Breast epithelium (tissue), 4 donors: ENCODE measurements at regions of chr11 and their contacts with region 1.

Region 1: DNA sequence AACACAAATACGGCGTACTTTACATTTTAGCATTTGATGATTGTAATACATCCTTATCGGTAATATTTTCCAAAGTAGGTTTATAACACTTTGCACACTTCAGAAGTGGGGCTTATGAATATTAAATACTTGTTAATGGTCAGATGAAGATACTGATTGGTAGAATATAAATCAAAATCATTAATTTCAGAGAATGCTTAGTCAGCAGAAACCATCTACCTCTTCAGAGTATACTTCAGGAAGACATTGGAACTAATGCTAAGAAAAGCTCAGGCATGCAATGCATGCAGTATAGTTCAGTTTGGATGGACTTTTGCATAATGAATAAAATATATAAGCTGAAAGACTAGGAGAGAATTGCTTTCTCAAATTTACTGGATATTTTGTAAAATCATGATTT is 19.7 kb upstream of the TECTA start:
- DNase-seq: no peak
- H3K4me3 ChIP-seq: no peak overlapping the region
- H3K27ac ChIP-seq: no peak overlapping the region
- H3K4me1 ChIP-seq: no peaks in the 10 kb centered on the region
- H3K27me3 ChIP-seq: no peaks in the 10 kb centered on the region
- CTCF ChIP-seq: no peak
- POLR2A ChIP-seq: no peak

Region 2: GRCh38 chr11:121119440-121119839 is 38.1 kb after region 1 on chr11:
- intact Hi-C with region 1: loop called (anchors 2 kb)
- DNase-seq: no peak
- H3K4me3 ChIP-seq: no peak overlapping the region
- H3K27ac ChIP-seq: no peak overlapping the region
- H3K4me1 ChIP-seq: no peaks in the 10 kb centered on the region
- H3K27me3 ChIP-seq: no peaks in the 10 kb centered on the region
- CTCF ChIP-seq: no peak
- POLR2A ChIP-seq: no peak